Ascending aorta (tissue), 2 donors: ENCODE measurements at regions of chr3 and their contacts with region 1.

Region 1: GRCh38 chr3:9946112-9947024 is 5.8 kb downstream of the PRRT3 start:
- DNase-seq: peak; percentile 65 to 93
- H3K4me3 ChIP-seq: peak overlapping the region; percentile 76 to 80
- H3K27ac ChIP-seq: peak overlapping the region; percentile 71 to 81
- H3K4me1 ChIP-seq: peaks cover 5 to 7% of the 10 kb centered on the region in 2 donors
- H3K27me3 ChIP-seq: no peaks in the 10 kb centered on the region
- CTCF ChIP-seq: peak; percentile 63 to 88 (median 76)

Region 2: DNA sequence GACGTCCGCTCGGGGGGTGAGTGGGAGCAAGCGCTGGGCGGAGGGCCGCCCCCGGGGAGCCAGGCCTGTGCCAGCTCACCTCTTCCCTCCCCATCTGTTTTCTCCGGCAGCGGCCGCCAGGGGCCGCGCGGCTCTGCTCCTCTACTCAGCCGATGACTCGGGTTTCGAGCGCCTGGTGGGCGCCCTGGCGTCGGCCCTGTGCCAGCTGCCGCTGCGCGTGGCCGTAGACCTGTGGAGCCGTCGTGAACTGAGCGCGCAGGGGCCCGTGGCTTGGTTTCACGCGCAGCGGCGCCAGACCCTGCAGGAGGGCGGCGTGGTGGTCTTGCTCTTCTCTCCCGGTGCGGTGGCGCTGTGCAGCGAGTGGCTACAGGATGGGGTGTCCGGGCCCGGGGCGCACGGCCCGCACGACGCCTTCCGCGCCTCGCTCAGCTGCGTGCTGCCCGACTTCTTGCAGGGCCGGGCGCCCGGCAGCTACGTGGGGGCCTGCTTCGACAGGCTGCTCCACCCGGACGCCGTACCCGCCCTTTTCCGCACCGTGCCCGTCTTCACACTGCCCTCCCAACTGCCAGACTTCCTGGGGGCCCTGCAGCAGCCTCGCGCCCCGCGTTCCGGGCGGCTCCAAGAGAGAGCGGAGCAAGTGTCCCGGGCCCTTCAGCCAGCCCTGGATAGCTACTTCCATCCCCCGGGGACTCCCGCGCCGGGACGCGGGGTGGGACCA is 13.4 kb before region 1 on chr3:
- intact Hi-C with region 1: loop called (anchors 1 kb)
- DNase-seq: peak; percentile 53 to 96
- H3K4me3 ChIP-seq: peak overlapping the region; percentile 82 to 96
- H3K27ac ChIP-seq: peak overlapping the region; percentile 97 to 99
- H3K4me1 ChIP-seq: peaks cover 11 to 21% of the 10 kb centered on the region in 2 donors
- H3K27me3 ChIP-seq: no peaks in the 10 kb centered on the region
- CTCF ChIP-seq: peak; percentile 84 to 93 (median 89)

Region 3: DNA sequence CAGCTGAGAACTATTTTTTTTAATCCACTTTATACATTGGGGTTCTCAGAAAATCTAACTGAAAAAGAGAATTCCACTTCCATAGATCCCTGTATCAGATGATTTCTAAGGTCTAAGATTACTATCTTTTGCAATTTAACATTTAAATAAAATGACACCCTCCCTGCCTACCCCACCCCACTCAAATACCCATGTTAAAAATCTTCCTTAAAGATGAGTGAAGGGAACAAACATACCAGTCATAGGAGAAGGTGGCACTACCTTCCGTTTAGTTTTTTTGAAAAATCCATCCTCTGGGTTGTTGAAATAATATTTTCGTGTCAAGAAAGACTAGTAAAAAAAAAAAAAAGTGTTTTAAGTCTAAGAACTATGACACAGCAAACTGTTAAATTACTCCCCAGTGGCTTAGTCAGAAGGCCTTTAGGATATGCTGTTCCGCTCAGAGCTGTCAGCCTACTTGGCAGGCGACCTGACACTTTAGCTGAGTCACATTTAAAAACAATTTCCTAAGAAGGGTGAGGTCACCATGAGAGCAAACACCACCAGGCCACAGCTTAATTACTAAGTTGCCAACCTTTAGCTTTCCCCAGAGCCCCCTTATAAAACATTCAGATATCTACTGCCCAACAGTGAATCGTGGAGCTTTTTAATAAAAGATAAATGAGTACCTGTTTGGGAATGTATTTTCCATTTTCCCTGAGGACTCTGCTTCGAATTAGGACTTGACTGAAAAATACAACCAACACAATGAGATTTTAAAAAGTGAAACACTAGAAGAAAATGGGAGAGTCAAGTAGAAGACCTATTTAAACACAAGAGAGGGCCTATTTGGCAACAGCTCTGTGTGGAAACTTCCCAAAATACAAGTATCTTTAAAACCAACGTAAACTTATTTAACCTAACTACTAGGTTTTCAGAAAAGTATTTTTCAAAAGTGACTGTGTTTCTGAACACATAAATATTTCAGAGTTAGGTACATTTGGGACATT is 30.6 kb after region 1 on chr3:
- intact Hi-C with region 1: loop called (anchors 2 kb)
- DNase-seq: peak; percentile 62 to 92
- H3K4me3 ChIP-seq: no peak overlapping the region
- H3K27ac ChIP-seq: peak overlapping the region; percentile 77 to 89
- H3K4me1 ChIP-seq: peaks cover 6 to 19% of the 10 kb centered on the region in 2 donors
- H3K27me3 ChIP-seq: no peaks in the 10 kb centered on the region
- CTCF ChIP-seq: no peak

Region 4: GRCh38 chr3:10115326-10116137 is 169.2 kb after region 1 on chr3 and contains the start of gene BRK1:
- intact Hi-C with region 1: loop called (anchors 2 kb)
- DNase-seq: peak; percentile 87 to 98
- H3K4me3 ChIP-seq: peak within 1 kb of the TSS; percentile 75 to 76
- H3K27ac ChIP-seq: peak within 1 kb of the TSS; percentile 55 to 74
- H3K4me1 ChIP-seq: peaks cover 6 to 11% of the 10 kb centered on the region in 2 donors
- H3K27me3 ChIP-seq: no peaks in the 10 kb centered on the region
- CTCF ChIP-seq: no peak
- total RNA-seq, gene BRK1: 87.3 TPM